ENCODE measurements at regions of chr1 and their contacts with region 1.

Region 1: DNA sequence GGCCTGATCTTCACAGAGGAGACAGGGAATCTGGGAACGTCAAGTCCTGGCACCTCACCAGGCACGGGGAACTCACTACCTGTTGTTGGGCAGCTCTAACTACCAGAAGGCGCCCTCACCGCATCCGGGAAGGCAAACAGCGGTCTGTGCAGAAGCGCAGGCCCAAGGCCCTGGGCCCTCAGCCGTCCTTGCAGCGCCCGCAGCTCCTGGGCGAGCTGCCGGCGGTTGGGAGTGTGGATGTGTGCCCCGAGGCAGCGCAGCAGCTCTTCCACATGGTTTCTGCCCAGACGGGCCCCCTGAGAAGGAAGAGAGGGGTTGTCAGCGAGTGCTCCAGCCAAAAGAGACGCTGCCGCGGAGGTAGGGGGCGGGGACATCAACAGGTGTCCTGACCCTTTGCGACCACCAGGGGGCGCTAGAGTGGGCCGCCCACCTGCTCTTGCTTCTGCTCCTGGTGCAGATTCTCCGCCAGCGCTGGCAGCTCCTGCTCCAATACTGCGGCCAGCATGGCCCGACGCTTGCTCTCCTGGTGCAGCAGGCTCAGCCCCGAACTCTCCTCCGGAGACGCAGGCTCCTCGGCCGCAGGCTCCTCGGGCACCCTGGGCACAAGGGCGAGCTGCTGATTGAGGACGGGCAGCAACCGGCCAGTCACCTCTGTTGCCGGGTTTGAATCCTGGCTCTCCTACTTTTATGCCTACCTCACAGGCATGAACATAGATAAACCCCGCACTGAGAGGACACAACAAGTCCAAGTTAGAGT is 9.3 kb downstream of the MAP3K6 start:
- DNase-seq: peak; percentile 90
- ATAC-seq: peak; percentile 71
- H3K4me3 ChIP-seq: peak overlapping the region; percentile 21 to 63 (median 54)
- H3K4me3 Mint-ChIP-seq: peak overlapping the region; percentile 84
- H3K27ac ChIP-seq: peak overlapping the region; percentile 19 to 34
- H3K27ac Mint-ChIP-seq: peak overlapping the region; percentile 75
- H3K4me1 ChIP-seq: peaks cover 36 to 54% of the 10 kb centered on the region in 2 donors
- H3K4me1 Mint-ChIP-seq: peaks cover 48% of the 10 kb centered on the region
- H3K27me3 ChIP-seq: no peaks in the 10 kb centered on the region
- H3K27me3 Mint-ChIP-seq: no peaks in the 10 kb centered on the region
- CTCF ChIP-seq: peak; percentile 98

Region 2: DNA sequence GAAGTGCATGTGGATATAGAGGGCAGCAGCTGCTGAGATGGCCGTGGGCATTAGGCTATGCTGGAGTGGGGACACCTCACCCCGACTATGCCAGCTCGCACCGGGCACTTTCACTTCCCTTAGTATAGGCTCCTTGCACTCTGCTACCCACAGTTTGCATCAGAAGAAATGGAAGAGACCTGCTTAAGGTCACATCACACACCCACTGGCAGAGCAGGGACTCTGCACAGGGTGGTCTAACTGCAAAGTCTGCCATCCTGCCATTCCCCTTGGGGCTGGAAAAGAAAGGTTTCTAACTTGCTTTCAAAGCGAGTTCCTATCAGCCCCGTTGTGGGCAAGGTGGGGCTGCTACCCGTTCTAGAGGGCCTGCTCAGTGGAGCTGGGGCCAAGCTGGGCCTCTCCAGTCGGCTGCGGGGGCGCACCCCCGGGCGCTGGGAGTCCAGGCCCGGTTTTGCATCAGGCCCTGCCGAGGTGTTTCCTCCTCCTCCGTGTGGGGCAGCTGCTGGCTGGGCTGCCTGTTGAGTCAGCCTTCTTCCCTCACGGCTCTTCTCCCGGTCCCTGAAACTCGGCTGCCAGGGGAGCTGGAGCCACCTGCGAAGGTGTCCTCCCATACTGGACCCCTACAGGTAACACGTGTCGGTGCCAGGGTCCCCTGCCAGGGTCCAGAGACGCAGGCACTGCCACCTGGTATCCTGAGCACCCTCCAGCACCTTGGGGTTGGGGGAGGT is 15.8 kb before region 1 on chr1 and contains the start of gene SYTL1:
- CTCF ChIA-PET with region 1: interaction called, 132 read pairs
- POLR2A ChIA-PET with region 1: interaction called, 16 read pairs
- intact Hi-C with region 1: loop called (anchors 1 kb)
- DNase-seq: peak; percentile 89
- ATAC-seq: peak; percentile 78
- H3K4me3 ChIP-seq: peak within 1 kb of the TSS; percentile 61 to 89 (median 79)
- H3K4me3 Mint-ChIP-seq: peak within 1 kb of the TSS; percentile 96
- H3K27ac ChIP-seq: peak within 1 kb of the TSS; percentile 85 to 88
- H3K27ac Mint-ChIP-seq: peak within 1 kb of the TSS; percentile 98
- H3K4me1 ChIP-seq: peaks cover 37 to 59% of the 10 kb centered on the region in 2 donors
- H3K4me1 Mint-ChIP-seq: peaks cover 64% of the 10 kb centered on the region
- H3K27me3 ChIP-seq: no peaks in the 10 kb centered on the region
- H3K27me3 Mint-ChIP-seq: no peaks in the 10 kb centered on the region
- CTCF ChIP-seq: no peak
- total RNA-seq, gene SYTL1: 156 and 159 TPM in 2 replicates

Region 3: DNA sequence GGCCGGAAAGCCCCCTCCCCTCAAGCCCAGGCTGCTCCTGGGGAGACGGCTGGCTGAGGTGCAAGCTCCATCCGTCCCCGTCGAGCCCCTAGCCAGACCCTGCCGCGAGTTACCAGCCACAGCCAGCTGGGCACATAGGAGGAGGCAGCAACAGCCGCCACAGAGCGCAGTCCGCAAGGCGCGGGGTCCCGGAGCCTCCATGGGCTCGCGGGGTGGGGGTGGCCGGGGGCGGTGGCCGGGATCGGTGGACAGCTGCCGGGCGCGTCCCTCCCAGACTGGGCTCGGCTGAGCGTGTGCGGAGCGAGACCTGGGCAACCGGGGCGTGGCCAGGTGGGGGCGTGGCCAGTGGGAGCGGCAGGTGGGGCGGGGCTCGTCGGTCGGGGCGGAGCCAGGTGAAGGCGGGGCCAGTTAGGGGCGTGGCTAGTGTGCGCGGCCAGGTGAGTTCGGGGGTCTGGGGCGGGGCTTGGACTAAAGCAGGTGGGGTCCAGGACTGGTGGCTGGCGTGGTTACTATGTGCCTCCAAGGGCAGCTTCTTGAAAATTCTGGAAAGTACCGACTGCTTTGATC is 25.7 kb after region 1 on chr1 and contains the start of gene CD164L2:
- CTCF ChIA-PET with region 1: interaction called, 135 read pairs
- POLR2A ChIA-PET with region 1: interaction called, 6 read pairs
- intact Hi-C with region 1: loop called (anchors 1 kb)
- DNase-seq: no peak
- ATAC-seq: peak; percentile 72
- H3K4me3 ChIP-seq: no peak within 1 kb of the TSS
- H3K4me3 Mint-ChIP-seq: no peak within 1 kb of the TSS
- H3K27ac ChIP-seq: no peak within 1 kb of the TSS
- H3K27ac Mint-ChIP-seq: no peak within 1 kb of the TSS
- H3K4me1 ChIP-seq: peaks cover 8 to 12% of the 10 kb centered on the region in 2 donors
- H3K4me1 Mint-ChIP-seq: peaks cover 8% of the 10 kb centered on the region
- H3K27me3 ChIP-seq: no peaks in the 10 kb centered on the region
- H3K27me3 Mint-ChIP-seq: peaks cover 4% of the 10 kb centered on the region
- CTCF ChIP-seq: no peak
- total RNA-seq, gene CD164L2: not detected in 2 replicates

Measured in B cell (primary cell).